GM10248 (cell line): ENCODE measurements at regions of chr1 and their contacts with region 1.

Region 1: DNA sequence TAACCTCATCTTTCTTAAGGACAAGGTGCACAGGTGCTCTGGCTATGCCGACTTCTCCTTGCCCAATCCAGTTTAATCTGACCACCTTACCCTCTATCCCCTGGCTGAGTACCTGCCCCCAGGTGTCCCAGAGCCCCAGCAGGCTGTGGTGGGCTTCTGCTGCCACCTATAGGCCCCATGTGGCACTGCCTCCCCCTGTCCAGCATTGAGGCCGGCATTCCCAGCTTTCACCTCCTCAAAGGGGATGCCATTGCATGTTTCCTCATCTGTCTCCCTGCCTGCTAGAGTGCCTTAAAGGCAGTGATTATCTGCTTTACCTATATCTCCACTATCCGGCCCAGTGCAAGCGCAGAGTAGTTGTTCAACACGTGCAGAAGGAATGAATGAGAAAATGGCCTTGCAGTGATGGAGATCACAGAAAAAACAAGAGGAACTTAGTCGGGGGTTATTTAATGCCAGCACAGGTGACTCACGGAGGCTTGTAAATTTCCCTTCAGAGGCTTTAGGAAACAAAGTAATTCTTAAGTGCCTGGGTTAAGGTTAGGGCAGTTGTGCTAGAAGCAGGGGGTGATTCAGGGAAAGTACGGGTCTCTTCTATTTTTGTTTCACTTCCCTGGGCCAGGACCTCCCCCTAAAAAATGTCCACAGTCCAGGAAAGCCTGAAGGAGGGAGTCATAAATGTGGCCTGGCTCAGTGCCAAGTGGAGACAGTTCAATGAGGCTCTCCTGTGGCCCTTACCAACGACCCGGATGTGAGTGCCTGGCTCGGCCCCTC is 131.8 kb upstream of the NGF start:
- DNase-seq: peak; percentile 54
- CTCF ChIP-seq: peak; percentile 73

Region 2: DNA sequence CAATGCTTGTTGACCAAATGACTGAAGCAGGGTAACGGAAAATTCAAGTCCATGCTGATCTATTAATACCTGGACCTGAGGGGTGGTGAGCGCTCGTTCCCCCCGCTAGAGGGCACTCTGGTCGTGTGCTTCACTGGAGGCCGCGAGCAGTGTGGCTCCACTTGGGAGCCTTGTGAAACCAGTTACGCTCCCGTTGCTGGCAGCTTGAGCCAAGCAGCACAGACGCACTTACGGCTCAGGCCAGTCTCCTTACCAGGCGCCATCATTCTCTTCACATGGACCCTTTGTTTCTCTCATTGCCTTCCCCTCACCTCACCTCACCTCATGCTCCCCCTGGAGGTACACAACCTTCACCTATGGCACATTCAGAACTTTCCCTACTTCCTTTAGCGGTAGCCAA is 330.9 kb before region 1 on chr1:
- CTCF ChIA-PET with region 1: interaction called, 62 read pairs
- POLR2A ChIA-PET with region 1: no interaction called
- DNase-seq: peak; percentile 79
- CTCF ChIP-seq: peak; percentile 90

Region 3: DNA sequence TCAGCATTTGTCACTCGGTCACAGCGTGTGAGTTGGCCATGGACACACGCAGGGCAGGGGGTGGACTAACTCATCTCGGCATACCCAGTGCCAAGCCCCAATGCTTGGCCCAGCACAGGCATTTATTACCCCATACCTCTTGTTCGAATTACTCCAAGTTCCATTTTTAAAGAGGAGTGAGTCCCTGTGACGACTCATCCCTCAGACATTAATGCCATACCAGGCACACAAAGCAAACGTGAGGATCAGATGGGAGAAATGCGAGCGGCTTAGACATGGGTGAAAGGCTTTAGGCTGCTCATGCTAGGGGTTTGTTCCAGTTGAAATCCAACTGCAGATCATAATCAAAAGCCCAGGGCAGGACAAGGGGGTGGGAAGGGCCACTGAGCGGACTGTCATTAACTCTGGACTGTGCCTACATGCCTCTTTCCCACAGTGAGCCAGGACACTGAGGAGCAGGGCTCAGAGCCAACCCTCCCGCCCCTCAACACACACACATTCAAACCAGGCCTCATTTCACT is 13.4 kb before region 1 on chr1:
- CTCF ChIA-PET with region 1: interaction called, 18 read pairs
- POLR2A ChIA-PET with region 1: no interaction called
- DNase-seq: no peak
- CTCF ChIP-seq: no peak